PC-9 (cell line): ENCODE measurements at regions of chr9 and their contacts with region 1.

Region 1: DNA sequence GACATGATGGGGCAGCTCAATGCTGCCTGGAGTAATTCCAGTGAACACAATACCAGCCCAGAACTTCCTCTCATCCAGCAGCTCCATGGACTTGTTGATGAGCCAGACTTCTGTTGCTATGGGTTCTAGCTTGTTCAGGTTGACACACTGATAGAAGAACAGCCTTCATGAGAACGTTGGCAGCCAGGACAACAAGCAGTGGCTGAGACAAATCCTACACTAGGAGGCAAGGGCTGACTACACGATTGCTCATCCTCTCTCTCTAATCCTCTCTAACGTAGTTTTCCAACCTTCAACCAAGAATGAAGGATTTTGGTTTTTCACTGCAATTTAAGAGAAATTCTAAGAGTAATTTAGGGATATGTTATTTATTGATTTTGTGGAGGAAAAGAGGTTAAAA is 67.8 kb downstream of the NIPSNAP3B start:
- DNase-seq: no peak
- H3K4me3 ChIP-seq: no peak overlapping the region
- H3K27ac ChIP-seq: no peak overlapping the region
- H3K4me1 ChIP-seq: peaks cover 35% of the 10 kb centered on the region
- H3K27me3 ChIP-seq: no peaks in the 10 kb centered on the region
- CTCF ChIP-seq: no peak

Region 2: DNA sequence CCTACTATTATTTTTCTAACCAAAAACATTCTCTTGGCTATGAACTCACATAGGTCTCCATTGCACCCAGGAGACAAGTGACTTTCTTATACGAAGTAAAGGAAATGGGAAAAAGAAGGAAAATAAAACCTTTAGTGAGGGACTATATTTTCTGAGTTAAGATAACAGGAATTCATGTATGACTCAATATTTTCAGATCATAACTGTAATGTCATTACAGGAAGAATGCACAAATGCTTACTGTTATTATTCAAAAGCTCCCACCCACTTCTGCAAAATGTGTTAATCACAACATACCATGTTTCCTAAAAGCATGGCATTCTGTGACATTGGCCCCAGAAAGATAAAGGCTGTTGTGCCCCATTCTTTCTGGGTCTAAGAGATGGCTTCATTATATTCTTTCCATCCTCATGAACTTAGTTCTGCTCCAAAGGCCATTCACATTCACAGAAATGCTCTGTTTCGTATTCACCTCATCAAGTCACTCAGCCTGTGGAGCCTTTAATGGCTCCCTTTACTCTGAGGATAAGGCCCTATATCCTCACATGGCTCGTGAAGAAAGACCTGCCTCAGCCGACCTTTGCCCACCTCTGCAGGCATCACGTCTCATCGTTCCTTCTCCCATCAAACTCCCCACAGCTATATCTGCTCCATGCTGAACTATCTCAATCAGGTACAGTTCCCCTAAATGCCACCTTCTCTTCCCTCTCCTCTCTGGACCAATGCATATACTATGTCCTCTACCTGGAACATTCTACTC is 19.3 kb after region 1 on chr9:
- CTCF ChIA-PET with region 1: no interaction called
- POLR2A ChIA-PET with region 1: interaction called, 4 read pairs
- intact Hi-C with region 1: loop called (anchors 2 kb)
- DNase-seq: no peak
- H3K4me3 ChIP-seq: no peak overlapping the region
- H3K27ac ChIP-seq: no peak overlapping the region
- H3K4me1 ChIP-seq: peaks cover 37% of the 10 kb centered on the region
- H3K27me3 ChIP-seq: no peaks in the 10 kb centered on the region
- CTCF ChIP-seq: no peak

Region 3: DNA sequence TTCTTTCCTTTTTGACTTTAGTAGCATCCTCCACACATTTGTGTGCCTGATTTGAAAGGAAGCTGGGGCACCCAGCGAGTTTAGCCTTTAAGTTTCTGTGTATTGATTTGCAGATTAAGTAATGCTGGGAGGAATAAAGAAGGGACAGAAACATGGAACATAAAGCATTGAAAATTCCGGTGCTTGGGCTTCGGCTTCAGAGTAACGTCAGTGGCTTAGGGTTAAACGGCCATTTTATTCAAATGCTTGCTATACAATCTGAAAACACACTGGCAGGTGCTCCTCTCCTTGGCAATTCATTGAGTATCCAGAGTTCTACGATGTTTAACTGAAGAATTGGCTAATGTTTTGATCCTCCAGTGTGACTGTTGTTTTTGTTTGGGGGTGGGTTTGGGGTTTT is 558.1 kb after region 1 on chr9:
- CTCF ChIA-PET with region 1: no interaction called
- POLR2A ChIA-PET with region 1: interaction called, 15 read pairs
- intact Hi-C with region 1: no loop called
- DNase-seq: no peak
- H3K4me3 ChIP-seq: no peak overlapping the region
- H3K27ac ChIP-seq: no peak overlapping the region
- H3K4me1 ChIP-seq: no peaks in the 10 kb centered on the region
- H3K27me3 ChIP-seq: no peaks in the 10 kb centered on the region
- CTCF ChIP-seq: no peak

Region 4: GRCh38 chr9:106218854-106219253 is 1387.2 kb after region 1 on chr9:
- CTCF ChIA-PET with region 1: no interaction called
- POLR2A ChIA-PET with region 1: no interaction called
- intact Hi-C with region 1: no loop called
- DNase-seq: no peak
- H3K4me3 ChIP-seq: no peak overlapping the region
- H3K27ac ChIP-seq: no peak overlapping the region
- H3K4me1 ChIP-seq: no peaks in the 10 kb centered on the region
- H3K27me3 ChIP-seq: no peaks in the 10 kb centered on the region
- CTCF ChIP-seq: no peak